HCT116 (cell line): ENCODE measurements at regions of chr10 and their contacts with region 1.

Region 1: DNA sequence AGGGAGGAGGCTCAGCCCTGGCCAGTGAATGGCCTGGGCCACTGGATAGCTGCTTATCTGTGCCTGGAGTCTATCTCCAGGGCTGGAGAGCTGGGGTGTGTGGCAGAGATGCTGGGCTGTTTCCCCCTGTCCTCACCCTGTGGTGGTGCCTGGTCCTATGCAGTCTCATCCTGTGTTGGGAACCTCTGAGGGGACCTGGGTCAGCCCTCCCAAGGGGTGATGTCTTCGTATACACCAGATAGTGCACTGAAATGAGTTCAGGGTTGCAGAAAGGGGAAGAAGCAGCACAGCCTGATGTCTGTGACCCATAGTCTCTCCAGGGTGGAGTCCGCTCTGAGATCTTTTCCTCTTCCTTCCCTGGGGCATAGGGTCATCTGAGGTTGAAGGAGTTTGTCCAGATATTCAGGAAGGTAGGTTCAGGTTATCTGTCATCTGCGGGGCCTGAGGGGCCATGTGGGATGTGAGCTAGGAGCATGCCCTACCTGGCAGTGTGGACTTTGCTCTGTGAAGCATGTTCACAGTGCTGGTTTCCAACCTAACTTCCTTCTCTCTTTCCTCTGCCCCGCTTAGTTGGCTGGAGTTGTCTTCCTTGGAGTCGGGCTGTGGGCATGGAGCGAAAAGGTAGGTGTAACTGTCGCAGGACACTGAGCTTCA is 33.4 kb upstream of the SH2D4B start:
- DNase-seq: no peak
- ATAC-seq: no peak
- H3K4me3 ChIP-seq: no peak overlapping the region
- H3K27ac ChIP-seq: peak overlapping the region; percentile 90
- H3K4me1 ChIP-seq: peaks cover 97 to 98% of the 10 kb centered on the region in 2 experiments
- H3K27me3 ChIP-seq: no peaks in the 10 kb centered on the region
- CTCF ChIP-seq: no peak
- POLR2A ChIP-seq: no peak
- RAD21 ChIP-seq: no peak

Region 2: GRCh38 chr10:80110986-80111385 is 393.3 kb before region 1 on chr10:
- CTCF ChIA-PET with region 1: no interaction called
- POLR2A ChIA-PET with region 1: no interaction called
- RAD21 ChIA-PET with region 1: no interaction called
- intact Hi-C with region 1: no loop called
- DNase-seq: no peak
- ATAC-seq: no peak
- H3K4me3 ChIP-seq: no peak overlapping the region
- H3K27ac ChIP-seq: no peak overlapping the region
- H3K4me1 ChIP-seq: no peaks in the 10 kb centered on the region
- H3K27me3 ChIP-seq: no peaks in the 10 kb centered on the region
- CTCF ChIP-seq: no peak
- POLR2A ChIP-seq: no peak
- RAD21 ChIP-seq: no peak

Region 3: DNA sequence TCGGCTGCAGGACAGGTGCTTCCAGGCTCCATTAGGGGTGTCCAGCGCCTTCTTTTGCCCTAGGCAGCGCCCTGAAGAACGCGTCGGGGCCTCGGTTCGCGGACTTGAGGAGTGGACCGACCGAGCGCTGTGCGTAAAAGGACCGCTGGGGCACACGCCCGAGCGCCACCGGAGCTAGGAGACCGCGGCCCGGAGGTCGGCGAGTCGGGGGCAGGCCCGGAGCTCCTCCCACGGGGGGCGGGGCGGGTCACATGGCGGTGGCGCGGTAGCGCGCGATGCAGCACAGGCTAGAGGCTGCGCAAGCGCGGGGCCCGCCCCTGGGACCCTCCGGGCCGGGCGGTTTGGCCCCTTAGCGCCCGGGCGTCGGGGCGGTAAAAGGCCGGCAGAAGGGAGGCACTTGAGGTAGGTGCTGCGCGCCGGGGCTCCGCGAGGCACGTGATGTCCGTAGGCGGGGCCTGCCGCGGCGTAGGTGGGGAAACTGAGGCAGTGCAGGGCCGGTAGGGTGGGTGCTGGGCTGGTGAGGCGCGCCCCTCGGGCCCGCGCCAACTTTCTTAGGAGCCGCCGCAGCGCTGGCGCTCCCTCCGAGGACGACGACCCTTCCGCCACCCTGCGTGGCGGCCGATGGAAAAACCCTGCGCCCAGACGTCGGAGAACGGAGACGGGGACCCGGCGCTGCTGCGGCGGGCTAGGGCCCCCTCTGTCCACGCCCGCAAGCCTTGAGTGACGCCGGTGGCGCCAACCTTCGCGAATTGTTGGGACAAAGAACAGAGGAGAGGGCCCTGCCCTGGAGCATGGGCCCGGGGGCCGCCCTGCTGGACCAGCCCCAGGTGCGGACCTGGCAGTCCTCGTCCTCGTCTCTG is 95.8 kb before region 1 on chr10 and contains the start of gene PRXL2A:
- CTCF ChIA-PET with region 1: interaction called, 13 read pairs
- POLR2A ChIA-PET with region 1: no interaction called
- RAD21 ChIA-PET with region 1: no interaction called
- intact Hi-C with region 1: no loop called
- DNase-seq: no peak
- ATAC-seq: peak; percentile 86
- H3K4me3 ChIP-seq: peak within 1 kb of the TSS; percentile 43 to 57
- H3K27ac ChIP-seq: peak within 1 kb of the TSS; percentile 63
- H3K4me1 ChIP-seq: peaks cover 3 to 12% of the 10 kb centered on the region in 2 experiments; a peak in 3 of 4 replicates
- H3K27me3 ChIP-seq: no peaks in the 10 kb centered on the region
- CTCF ChIP-seq: no peak
- POLR2A ChIP-seq: peak; percentile 76
- RAD21 ChIP-seq: no peak
- total RNA-seq, gene PRXL2A: 4.9 TPM

Region 4: DNA sequence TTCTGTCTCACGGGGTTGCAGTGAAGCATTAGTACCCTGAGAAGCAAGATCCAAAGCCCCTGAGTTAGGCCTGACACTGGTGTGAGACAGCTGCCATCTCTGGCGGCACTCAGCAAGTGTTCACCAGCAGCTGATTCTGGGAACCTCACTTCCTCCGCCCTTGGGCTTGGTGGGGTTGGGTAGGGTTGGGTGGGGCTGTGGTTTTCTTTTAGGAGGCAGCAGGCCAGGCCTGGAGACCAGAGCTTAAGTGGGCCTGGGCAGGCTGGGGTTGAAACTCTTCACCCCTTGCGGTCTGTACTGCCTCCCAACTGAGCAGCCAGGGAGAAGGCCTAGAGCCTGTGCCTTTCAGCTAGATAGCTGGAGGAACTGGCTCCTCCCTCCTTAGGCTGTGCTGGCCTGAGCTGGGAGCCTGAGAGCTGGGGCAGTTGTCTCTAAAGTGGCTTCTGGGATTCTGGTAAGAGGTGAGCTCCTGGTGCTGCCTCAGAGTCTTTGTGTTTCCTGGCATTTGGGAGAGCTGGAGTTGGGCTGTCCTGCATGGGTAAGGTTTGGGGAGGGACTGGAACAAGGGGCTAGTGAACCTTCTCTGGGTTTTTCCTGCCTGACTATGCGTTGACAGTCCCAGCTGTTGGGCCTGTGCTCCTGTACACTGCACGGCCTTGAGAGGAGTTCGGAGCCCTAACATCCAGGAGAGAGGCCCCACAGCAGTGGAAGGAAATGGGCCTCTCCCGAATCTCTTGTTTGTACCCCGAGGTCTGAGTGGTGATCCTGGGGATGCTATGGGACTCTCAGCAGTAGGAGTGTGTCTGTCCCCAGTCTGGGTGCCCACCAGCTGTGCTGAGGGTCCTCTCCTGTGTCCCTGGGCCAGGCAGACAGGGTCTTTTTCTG is 45.0 kb before region 1 on chr10:
- CTCF ChIA-PET with region 1: interaction called, 53 read pairs
- POLR2A ChIA-PET with region 1: interaction called, 18 read pairs
- RAD21 ChIA-PET with region 1: interaction called, 7 to 23 read pairs
- intact Hi-C with region 1: loop called (anchors 2 kb)
- DNase-seq: no peak
- ATAC-seq: peak; percentile 65
- H3K4me3 ChIP-seq: peak overlapping the region in 1 of 2 experiments; percentile 47; a peak in 1 of 4 replicates
- H3K27ac ChIP-seq: peak overlapping the region; percentile 79
- H3K4me1 ChIP-seq: peaks cover 81 to 92% of the 10 kb centered on the region in 2 experiments
- H3K27me3 ChIP-seq: no peaks in the 10 kb centered on the region
- CTCF ChIP-seq: no peak
- POLR2A ChIP-seq: no peak
- RAD21 ChIP-seq: 0 out of 2 replicates have a peak, but pooled peaks have one; percentile 4

Region 5: GRCh38 chr10:80472234-80473095 is 31.8 kb before region 1 on chr10:
- CTCF ChIA-PET with region 1: interaction called, 25 read pairs
- POLR2A ChIA-PET with region 1: interaction called, 4 read pairs
- RAD21 ChIA-PET with region 1: interaction called in 1 of 2 experiments, 6 read pairs
- intact Hi-C with region 1: no loop called
- DNase-seq: no peak
- ATAC-seq: 0 out of 2 replicates have a peak, but pooled peaks have one; percentile 30
- H3K4me3 ChIP-seq: peak overlapping the region in 1 of 2 experiments; percentile 23; a peak in 1 of 4 replicates
- H3K27ac ChIP-seq: peak overlapping the region; percentile 51
- H3K4me1 ChIP-seq: peaks cover 53 to 86% of the 10 kb centered on the region in 2 experiments
- H3K27me3 ChIP-seq: no peaks in the 10 kb centered on the region
- CTCF ChIP-seq: peak in 2 of 3 experiments; percentile 2 to 26; a peak in 1 of 6 replicates
- POLR2A ChIP-seq: no peak
- RAD21 ChIP-seq: no peak

Region 6: GRCh38 chr10:80485950-80486764 is 18.1 kb before region 1 on chr10:
- CTCF ChIA-PET with region 1: interaction called, 11 read pairs
- POLR2A ChIA-PET with region 1: interaction called, 4 read pairs
- RAD21 ChIA-PET with region 1: interaction called in 1 of 2 experiments, 4 read pairs
- intact Hi-C with region 1: loop called (anchors 2 kb)
- DNase-seq: no peak
- ATAC-seq: no peak
- H3K4me3 ChIP-seq: no peak overlapping the region
- H3K27ac ChIP-seq: no peak overlapping the region
- H3K4me1 ChIP-seq: peaks cover 41 to 66% of the 10 kb centered on the region in 2 experiments
- H3K27me3 ChIP-seq: no peaks in the 10 kb centered on the region
- CTCF ChIP-seq: no peak
- POLR2A ChIP-seq: no peak
- RAD21 ChIP-seq: no peak

Region 7: DNA sequence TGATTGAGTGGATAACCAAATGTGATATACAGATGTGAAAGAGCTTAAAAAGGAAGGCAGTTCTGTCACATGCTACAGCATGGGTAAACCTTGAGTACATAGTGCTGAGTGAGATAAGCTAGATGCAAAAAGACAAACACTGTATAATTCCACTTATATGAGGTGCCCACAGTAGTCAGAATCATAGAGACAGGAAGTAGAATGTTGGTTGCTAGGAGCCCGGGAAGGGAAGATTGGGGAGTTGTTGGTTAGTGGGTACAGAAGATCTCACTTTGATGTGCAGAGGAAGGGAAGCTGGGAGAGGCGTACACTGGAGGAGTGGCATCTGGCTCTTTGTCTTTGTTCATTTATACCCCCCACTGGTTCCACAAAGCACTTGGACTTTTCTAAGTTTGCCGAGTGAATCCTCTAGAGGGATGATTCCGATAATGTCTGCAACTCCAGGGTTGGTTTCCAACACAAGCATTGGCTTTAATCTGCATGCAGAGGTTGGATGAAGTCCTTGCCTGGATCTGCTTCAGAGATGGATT is 10.7 kb before region 1 on chr10:
- CTCF ChIA-PET with region 1: interaction called, 16 read pairs
- POLR2A ChIA-PET with region 1: interaction called, 3 read pairs
- RAD21 ChIA-PET with region 1: no interaction called
- intact Hi-C with region 1: no loop called
- DNase-seq: no peak
- ATAC-seq: peak; percentile 35
- H3K4me3 ChIP-seq: no peak overlapping the region
- H3K27ac ChIP-seq: peak overlapping the region; percentile 26; the same call in 1 of the 2 replicates
- H3K4me1 ChIP-seq: peaks cover 51 to 54% of the 10 kb centered on the region in 2 experiments
- H3K27me3 ChIP-seq: no peaks in the 10 kb centered on the region
- CTCF ChIP-seq: no peak
- POLR2A ChIP-seq: no peak
- RAD21 ChIP-seq: no peak